GM12878 (cell line): ENCODE measurements at regions of chr16 and their contacts with region 1.

Region 1: GRCh38 chr16:28063641-28064061 is at the start of gene GSG1L:
- DNase-seq: no peak
- ATAC-seq: no peak
- H3K4me3 ChIP-seq: no peak within 1 kb of the TSS
- H3K27ac ChIP-seq: no peak within 1 kb of the TSS
- H3K4me1 ChIP-seq: no peaks in the 10 kb centered on the region
- H3K27me3 ChIP-seq: peaks cover 7 to 11% of the 10 kb centered on the region in 2 experiments; a peak in 3 of 4 replicates
- CTCF ChIP-seq: no peak
- EP300 ChIP-seq: no peak
- POLR2A ChIP-seq: no peak
- RAD21 ChIP-seq: no peak
- polyA plus RNA-seq, gene GSG1L: not detected

Region 2: GRCh38 chr16:27639561-27640276 is 423.9 kb before region 1 on chr16:
- CTCF ChIA-PET with region 1: interaction called, 3 read pairs
- POLR2A ChIA-PET with region 1: no interaction called
- RAD21 ChIA-PET with region 1: interaction called, 4 read pairs
- SMC1A ChIA-PET with region 1: interaction called, 5 read pairs
- in situ Hi-C with region 1: loop called (anchors 25 kb)
- intact Hi-C with region 1: no loop called
- DNase-seq: peak; percentile 2
- ATAC-seq: peak; percentile 97
- H3K4me3 ChIP-seq: no peak overlapping the region
- H3K27ac ChIP-seq: no peak overlapping the region
- H3K4me1 ChIP-seq: peaks cover 12% of the 10 kb centered on the region
- H3K27me3 ChIP-seq: no peaks in the 10 kb centered on the region
- CTCF ChIP-seq: peak; percentile 68 to 89 (median 81)
- EP300 ChIP-seq: no peak
- POLR2A ChIP-seq: no peak
- RAD21 ChIP-seq: peak; percentile 79

Region 3: DNA sequence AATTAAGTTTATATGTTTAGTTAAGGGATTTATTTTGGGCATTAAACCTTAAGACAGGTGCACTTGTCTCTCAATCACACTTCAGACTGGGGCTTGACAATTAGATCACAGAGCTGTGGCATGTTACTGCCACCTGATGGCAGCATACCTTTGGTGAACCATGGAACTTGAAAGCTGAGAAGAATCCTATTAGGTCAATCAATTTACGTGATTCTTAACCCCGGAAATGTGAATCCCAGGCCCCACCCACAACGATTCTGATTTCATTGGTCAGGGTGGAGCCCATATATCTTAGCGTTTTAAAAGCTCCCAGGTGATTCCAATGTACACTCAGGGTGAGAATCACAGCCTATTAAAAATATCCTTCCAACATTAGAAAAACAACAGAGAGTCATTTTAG is 91.2 kb before region 1 on chr16:
- CTCF ChIA-PET with region 1: interaction called, 41 read pairs
- POLR2A ChIA-PET with region 1: no interaction called
- RAD21 ChIA-PET with region 1: no interaction called
- SMC1A ChIA-PET with region 1: no interaction called
- in situ Hi-C with region 1: no loop called
- intact Hi-C with region 1: no loop called
- DNase-seq: peak; percentile 17
- ATAC-seq: peak; percentile 90
- H3K4me3 ChIP-seq: no peak overlapping the region
- H3K27ac ChIP-seq: no peak overlapping the region
- H3K4me1 ChIP-seq: no peaks in the 10 kb centered on the region
- H3K27me3 ChIP-seq: no peaks in the 10 kb centered on the region
- CTCF ChIP-seq: peak; percentile 69 to 73 (median 71)
- EP300 ChIP-seq: no peak
- POLR2A ChIP-seq: no peak
- RAD21 ChIP-seq: peak; percentile 58

Region 4: GRCh38 chr16:28202147-28202746 is 138.6 kb after region 1 on chr16:
- CTCF ChIA-PET with region 1: no interaction called
- POLR2A ChIA-PET with region 1: no interaction called
- RAD21 ChIA-PET with region 1: no interaction called
- SMC1A ChIA-PET with region 1: no interaction called
- in situ Hi-C with region 1: no loop called
- intact Hi-C with region 1: no loop called
- DNase-seq: no peak
- ATAC-seq: peak; percentile 86
- H3K4me3 ChIP-seq: 0 out of 2 replicates have a peak overlapping the region, but pooled peaks have one; percentile 43
- H3K27ac ChIP-seq: 0 out of 2 replicates have a peak overlapping the region, but pooled peaks have one; percentile 17
- H3K4me1 ChIP-seq: peaks cover 18% of the 10 kb centered on the region
- H3K27me3 ChIP-seq: no peaks in the 10 kb centered on the region
- CTCF ChIP-seq: peak; percentile 29 to 44 (median 39); a peak in 3 of 6 replicates
- EP300 ChIP-seq: no peak
- POLR2A ChIP-seq: no peak
- RAD21 ChIP-seq: no peak